AG04449 (cell line): ENCODE measurements at regions of chr13 and their contacts with region 1.

Region 1: GRCh38 chr13:59771272-59771671 is 392.5 kb downstream of the DIAPH3 start:
- DNase-seq: no peak
- H3K4me3 ChIP-seq: no peak overlapping the region
- CTCF ChIP-seq: peak; percentile 61

Region 2: DNA sequence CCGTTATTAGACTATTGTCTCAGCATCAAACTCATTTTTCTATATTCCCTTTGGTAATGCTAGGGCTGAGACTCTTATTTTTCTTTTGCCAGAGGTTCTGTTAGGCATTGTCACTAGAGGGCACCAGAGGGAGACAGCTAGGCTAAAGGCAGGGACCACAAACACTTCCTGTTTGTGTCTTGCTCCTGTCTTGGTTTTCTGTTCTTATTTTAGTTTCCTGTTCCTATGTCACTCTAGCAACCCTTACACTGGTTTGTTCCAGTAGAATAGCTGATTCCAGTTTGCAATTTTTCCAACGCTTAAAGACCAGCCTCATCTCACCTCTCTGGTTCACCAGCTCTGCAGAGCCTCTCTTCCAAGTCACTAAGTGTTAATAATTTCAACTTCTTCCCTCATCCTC is 379.6 kb before region 1 on chr13:
- CTCF ChIA-PET with region 1: interaction called, 40 read pairs
- POLR2A ChIA-PET with region 1: no interaction called
- DNase-seq: no peak
- H3K4me3 ChIP-seq: no peak overlapping the region
- CTCF ChIP-seq: peak; percentile 84

Region 3: GRCh38 chr13:59690857-59691500 is 80.3 kb before region 1 on chr13:
- CTCF ChIA-PET with region 1: interaction called, 13 read pairs
- POLR2A ChIA-PET with region 1: no interaction called
- DNase-seq: no peak
- H3K4me3 ChIP-seq: no peak overlapping the region
- CTCF ChIP-seq: no peak

Region 4: GRCh38 chr13:59755632-59756290 is 15.5 kb before region 1 on chr13:
- CTCF ChIA-PET with region 1: interaction called, 50 read pairs
- POLR2A ChIA-PET with region 1: no interaction called
- DNase-seq: no peak
- H3K4me3 ChIP-seq: no peak overlapping the region
- CTCF ChIP-seq: no peak

Region 5: GRCh38 chr13:59806801-59807200 is 35.5 kb after region 1 on chr13:
- CTCF ChIA-PET with region 1: no interaction called
- POLR2A ChIA-PET with region 1: no interaction called
- DNase-seq: no peak
- H3K4me3 ChIP-seq: no peak overlapping the region
- CTCF ChIP-seq: no peak

Region 6: DNA sequence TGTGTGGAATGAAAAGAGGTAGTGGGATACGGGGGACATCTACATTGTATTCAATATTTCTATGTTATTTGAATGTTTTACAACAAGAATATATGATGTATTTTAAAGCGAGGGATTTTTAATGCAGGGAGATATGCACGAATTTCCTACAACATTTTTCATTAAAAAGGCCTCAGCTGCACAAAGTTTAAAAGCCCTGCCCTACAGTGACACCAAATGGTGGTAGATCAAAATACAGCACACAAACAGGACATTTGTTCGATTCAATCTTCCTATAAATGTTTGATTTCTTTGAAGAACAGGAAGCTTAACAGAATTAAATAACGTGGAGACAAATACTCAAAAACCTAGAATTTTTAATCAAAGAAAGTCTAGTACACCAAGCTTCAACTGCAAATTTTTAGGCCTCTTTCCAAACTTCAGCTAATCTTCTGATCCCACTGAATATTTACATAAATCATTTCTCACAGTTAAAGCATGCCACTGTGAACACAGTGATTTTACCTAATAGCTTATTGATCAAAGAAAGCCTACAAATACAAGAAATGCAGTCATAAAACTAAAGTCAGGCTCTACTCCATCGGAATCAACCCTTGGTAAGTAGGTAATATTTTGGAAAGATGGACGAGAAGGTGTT is 135.3 kb after region 1 on chr13:
- CTCF ChIA-PET with region 1: interaction called, 23 read pairs
- POLR2A ChIA-PET with region 1: no interaction called
- DNase-seq: no peak
- H3K4me3 ChIP-seq: no peak overlapping the region
- CTCF ChIP-seq: peak; percentile 53